Panc1 (cell line): ENCODE measurements at regions of chr11 and their contacts with region 1.

Region 1: GRCh38 chr11:40149721-40150120 is 1309.7 kb downstream of the LRRC4C start:
- DNase-seq: no peak
- ATAC-seq: no peak
- H3K4me3 ChIP-seq: no peak overlapping the region
- H3K27ac ChIP-seq: no peak overlapping the region
- H3K4me1 ChIP-seq: no peaks in the 10 kb centered on the region
- H3K27me3 ChIP-seq: no peaks in the 10 kb centered on the region
- CTCF ChIP-seq: no peak

Region 2: GRCh38 chr11:39817241-39817640 is 332.5 kb before region 1 on chr11:
- CTCF ChIA-PET with region 1: no interaction called
- POLR2A ChIA-PET with region 1: no interaction called
- in situ Hi-C with region 1: no loop called
- intact Hi-C with region 1: no loop called
- DNase-seq: no peak
- ATAC-seq: no peak
- H3K4me3 ChIP-seq: no peak overlapping the region
- H3K27ac ChIP-seq: no peak overlapping the region
- H3K4me1 ChIP-seq: no peaks in the 10 kb centered on the region
- H3K27me3 ChIP-seq: no peaks in the 10 kb centered on the region
- CTCF ChIP-seq: no peak

Region 3: GRCh38 chr11:40274017-40274416 is 124.3 kb after region 1 on chr11:
- CTCF ChIA-PET with region 1: interaction called, 10 read pairs
- POLR2A ChIA-PET with region 1: no interaction called
- in situ Hi-C with region 1: no loop called
- intact Hi-C with region 1: no loop called
- DNase-seq: no peak
- ATAC-seq: no peak
- H3K4me3 ChIP-seq: no peak overlapping the region
- H3K27ac ChIP-seq: no peak overlapping the region
- H3K4me1 ChIP-seq: no peaks in the 10 kb centered on the region
- H3K27me3 ChIP-seq: 0 out of 2 replicates have a peak, but pooled peaks cover 2% of the 10 kb centered on the region
- CTCF ChIP-seq: no peak